CD4-positive, alpha-beta memory T cell (primary cell): ENCODE measurements at regions of chr7 and their contacts with region 1.

Region 1: GRCh38 chr7:22559829-22560489 is 60.0 kb upstream of the STEAP1B start:
- DNase-seq: peak; percentile 63 to 72 (median 68)
- H3K4me3 ChIP-seq: no peak overlapping the region
- H3K4me3 Mint-ChIP-seq: no peak overlapping the region
- H3K27ac ChIP-seq: no peak overlapping the region
- H3K27ac Mint-ChIP-seq: no peak overlapping the region
- H3K4me1 ChIP-seq: peaks cover 35% of the 10 kb centered on the region
- H3K4me1 Mint-ChIP-seq: peaks cover 20 to 39% (median 28%) of the 10 kb centered on the region in 4 donors
- H3K27me3 ChIP-seq: no peaks in the 10 kb centered on the region
- H3K27me3 Mint-ChIP-seq: peaks cover 4 to 9% of the 10 kb centered on the region in 2 donors

Region 2: GRCh38 chr7:22726345-22727185 is 166.6 kb after region 1 on chr7:
- CTCF ChIA-PET with region 1: interaction called, 233 read pairs
- POLR2A ChIA-PET with region 1: interaction called, 4 read pairs
- intact Hi-C with region 1: loop called (anchors 1 kb)
- DNase-seq: peak; percentile 50 to 59 (median 54)
- H3K4me3 ChIP-seq: no peak overlapping the region
- H3K4me3 Mint-ChIP-seq: peak overlapping the region; percentile 26 to 76 (median 66)
- H3K27ac ChIP-seq: no peak overlapping the region
- H3K27ac Mint-ChIP-seq: peak overlapping the region in 3 of 7 donors; percentile 5 to 88 (median 37)
- H3K4me1 ChIP-seq: peaks cover 17% of the 10 kb centered on the region
- H3K4me1 Mint-ChIP-seq: peaks cover 8 to 15% (median 11%) of the 10 kb centered on the region in 4 donors
- H3K27me3 ChIP-seq: no peaks in the 10 kb centered on the region
- H3K27me3 Mint-ChIP-seq: peaks cover 3 to 13% of the 10 kb centered on the region in 2 donors

Region 3: DNA sequence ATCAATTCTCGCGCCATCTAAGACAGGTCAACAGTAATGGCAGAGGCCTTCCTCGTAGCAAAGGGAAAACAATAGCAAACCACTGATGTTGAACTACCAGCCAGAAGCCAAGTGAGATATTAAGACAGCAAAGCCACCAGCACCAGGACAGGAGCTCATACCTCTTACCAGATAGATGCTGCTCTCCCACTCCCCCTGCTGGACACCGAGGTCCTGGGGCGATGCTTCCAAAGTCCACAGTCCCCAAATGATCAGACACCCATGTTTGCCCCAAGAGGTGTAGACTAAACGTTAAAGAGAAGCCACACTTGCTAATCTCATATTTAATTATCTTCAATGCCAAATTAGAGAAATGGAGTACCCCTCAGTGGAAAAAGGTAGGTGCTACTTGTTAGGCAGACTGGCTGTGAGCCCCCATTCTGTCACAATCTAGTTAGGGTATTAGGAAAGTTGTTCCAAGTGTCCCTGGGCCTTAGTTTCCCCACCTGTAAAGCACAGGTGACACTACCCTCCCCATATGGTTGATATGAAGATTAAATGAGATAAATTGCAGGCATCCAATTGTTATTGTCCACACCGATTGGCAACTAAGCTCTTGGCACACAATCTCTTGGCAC is 222.8 kb after region 1 on chr7:
- CTCF ChIA-PET with region 1: interaction called, 96 read pairs
- POLR2A ChIA-PET with region 1: no interaction called
- intact Hi-C with region 1: loop called (anchors 1 kb)
- DNase-seq: peak; percentile 53 to 62 (median 58)
- H3K4me3 ChIP-seq: no peak overlapping the region
- H3K4me3 Mint-ChIP-seq: no peak overlapping the region
- H3K27ac ChIP-seq: no peak overlapping the region
- H3K27ac Mint-ChIP-seq: no peak overlapping the region
- H3K4me1 ChIP-seq: no peaks in the 10 kb centered on the region
- H3K4me1 Mint-ChIP-seq: no peaks in the 10 kb centered on the region
- H3K27me3 ChIP-seq: no peaks in the 10 kb centered on the region
- H3K27me3 Mint-ChIP-seq: no peaks in the 10 kb centered on the region

Region 4: DNA sequence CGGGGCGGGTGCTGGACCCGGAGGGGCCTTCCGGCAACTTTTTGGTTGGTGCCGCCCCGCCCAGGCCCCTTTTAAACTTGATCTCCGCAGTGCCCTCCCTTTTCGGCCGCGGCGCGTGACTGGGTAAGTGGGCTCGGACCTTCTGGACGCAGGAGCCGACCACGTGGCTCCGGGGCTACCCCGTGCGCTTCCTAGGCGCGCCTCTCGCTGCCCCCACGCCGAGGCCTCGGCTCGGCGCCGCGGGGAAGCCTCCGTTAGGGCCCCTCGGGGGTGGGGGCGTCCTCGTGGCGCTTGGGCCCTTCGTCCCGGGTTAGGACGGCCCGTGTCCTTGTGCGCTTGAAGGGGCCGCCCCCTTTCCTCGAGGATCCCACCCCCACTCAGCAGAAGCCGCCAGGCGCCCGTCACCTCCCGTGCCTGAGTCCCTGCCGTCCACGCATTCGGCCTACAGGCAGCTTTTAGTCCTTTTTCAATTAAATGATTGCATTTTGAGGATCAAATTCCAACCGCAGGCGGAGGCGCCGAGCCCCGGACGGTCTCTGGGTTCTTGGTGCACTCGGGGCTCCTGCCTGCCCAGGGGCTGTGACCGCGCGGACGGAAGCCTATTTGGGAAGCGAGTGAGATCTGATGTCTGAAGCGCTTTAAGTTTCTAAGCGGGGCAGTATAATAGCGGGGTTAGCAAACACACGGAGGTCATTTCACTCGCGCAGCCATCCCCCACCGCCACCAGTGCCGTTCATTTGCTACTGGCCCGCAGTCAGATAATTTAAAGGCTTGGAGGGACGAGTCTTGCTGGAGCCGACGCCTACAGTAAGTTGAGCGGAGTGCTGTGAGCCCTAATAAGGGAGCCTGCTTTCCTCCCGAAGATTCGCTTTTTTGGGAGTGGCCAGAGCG is 294.4 kb after region 1 on chr7:
- CTCF ChIA-PET with region 1: interaction called, 4 read pairs
- POLR2A ChIA-PET with region 1: no interaction called
- intact Hi-C with region 1: loop called (anchors 2 kb)
- DNase-seq: peak; percentile 40 to 84 (median 77)
- H3K4me3 ChIP-seq: peak overlapping the region; percentile 63 to 93
- H3K4me3 Mint-ChIP-seq: peak overlapping the region; percentile 88 to 95 (median 95)
- H3K27ac ChIP-seq: peak overlapping the region; percentile 90
- H3K27ac Mint-ChIP-seq: peak overlapping the region; percentile 79 to 96 (median 93)
- H3K4me1 ChIP-seq: peaks cover 20% of the 10 kb centered on the region
- H3K4me1 Mint-ChIP-seq: peaks cover 8 to 20% (median 18%) of the 10 kb centered on the region in 4 donors
- H3K27me3 ChIP-seq: no peaks in the 10 kb centered on the region
- H3K27me3 Mint-ChIP-seq: peaks cover 0 to 2% of the 10 kb centered on the region in 2 donors

Region 5: DNA sequence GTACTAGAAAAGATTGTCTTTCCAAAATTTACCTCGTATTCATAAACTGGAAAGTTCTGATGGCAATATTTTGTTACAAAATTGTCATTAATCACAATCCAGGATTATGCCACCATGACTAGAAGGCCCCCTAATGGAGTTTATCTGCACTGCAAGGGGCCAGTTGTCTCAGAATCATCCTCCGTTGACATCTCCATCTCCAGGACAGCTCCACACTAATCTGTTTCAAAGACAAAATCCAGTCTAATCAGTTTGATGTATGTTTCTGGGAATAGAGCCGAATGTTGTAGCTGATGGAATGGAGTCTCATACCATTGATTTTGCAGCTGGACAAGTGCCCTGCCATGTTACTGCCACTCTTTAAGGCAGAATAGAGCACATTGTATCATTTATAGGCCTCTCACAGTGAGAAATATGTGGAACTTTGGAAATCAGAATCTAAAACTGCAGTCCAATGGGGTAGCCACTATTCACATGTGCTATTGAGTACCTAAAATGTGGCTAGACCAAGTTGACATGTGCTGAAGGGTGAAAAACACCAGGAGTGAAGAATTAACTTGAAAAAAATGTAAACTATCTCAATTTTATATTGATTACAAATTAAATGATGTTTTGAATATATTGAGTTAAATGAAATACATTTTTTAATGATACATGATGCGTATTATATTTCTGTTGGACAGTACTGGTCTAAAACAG is 301.0 kb after region 1 on chr7:
- CTCF ChIA-PET with region 1: interaction called, 5 read pairs
- POLR2A ChIA-PET with region 1: no interaction called
- intact Hi-C with region 1: loop called (anchors 1 kb)
- DNase-seq: peak in 4 of 5 donors; percentile 3 to 25 (median 10)
- H3K4me3 ChIP-seq: no peak overlapping the region
- H3K4me3 Mint-ChIP-seq: no peak overlapping the region
- H3K27ac ChIP-seq: no peak overlapping the region
- H3K27ac Mint-ChIP-seq: no peak overlapping the region
- H3K4me1 ChIP-seq: peaks cover 4% of the 10 kb centered on the region
- H3K4me1 Mint-ChIP-seq: peaks cover 0 to 15% (median 6%) of the 10 kb centered on the region in 4 donors
- H3K27me3 ChIP-seq: no peaks in the 10 kb centered on the region
- H3K27me3 Mint-ChIP-seq: no peaks in the 10 kb centered on the region